Right ventricle myocardium inferior (tissue), 1 donor: ENCODE measurements at regions of chr15 and their contacts with region 1.

Region 1: GRCh38 chr15:88476635-88477060 is 9.1 kb downstream of the MRPS11 start:
- DNase-seq: no peak
- ATAC-seq: peak; percentile 74

Region 2: DNA sequence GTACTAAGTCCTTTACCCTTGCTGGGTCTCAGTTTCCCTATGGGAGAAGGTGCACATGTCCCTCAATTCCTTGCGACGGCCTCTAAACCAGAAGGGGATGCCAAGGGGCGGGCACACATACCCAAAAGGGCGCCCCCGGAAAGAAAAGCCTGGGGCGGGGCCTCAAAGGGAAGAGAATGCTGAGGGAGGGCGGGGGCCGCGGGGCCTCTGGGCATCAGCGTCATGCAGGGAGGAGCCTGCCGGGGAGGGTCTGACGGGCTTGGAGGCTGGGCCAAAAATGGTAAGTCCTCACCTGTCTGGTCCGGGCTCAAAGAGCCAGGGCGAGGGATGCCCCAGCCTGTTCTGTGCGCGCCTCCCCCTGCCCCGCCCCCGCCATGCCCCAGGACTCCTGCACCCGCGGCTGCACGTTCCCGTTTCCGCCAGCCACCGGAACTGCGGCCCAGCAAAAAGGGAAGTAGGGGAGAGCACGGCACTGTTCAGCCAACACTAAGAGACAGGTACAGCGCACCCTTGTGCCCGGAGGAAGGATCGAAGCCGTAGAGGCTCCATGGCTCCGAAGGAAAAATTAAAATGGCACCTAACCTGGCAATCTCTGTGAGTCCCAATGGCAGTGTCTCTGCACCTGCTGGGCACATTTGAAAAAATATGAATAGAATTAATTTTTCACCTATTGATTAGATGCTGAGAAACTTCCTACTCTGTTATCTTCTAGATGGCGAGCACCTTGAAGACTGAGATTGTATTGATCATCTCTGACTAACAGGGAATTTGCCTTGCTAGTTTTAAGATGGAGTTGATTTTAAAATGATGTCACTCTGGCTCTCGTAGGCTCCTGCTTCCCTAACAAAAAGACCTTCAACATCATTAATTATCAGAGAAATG is 69.8 kb after region 1 on chr15 and contains the start of gene DET1:
- intact Hi-C with region 1: loop called (anchors 5 kb)
- DNase-seq: peak; percentile 97
- ATAC-seq: peak; percentile 99
- total RNA-seq, gene DET1: 6.5 TPM

Region 3: GRCh38 chr15:88610701-88611231 is 134.1 kb after region 1 on chr15:
- intact Hi-C with region 1: loop called (anchors 1 kb)
- DNase-seq: no peak
- ATAC-seq: no peak

Region 4: DNA sequence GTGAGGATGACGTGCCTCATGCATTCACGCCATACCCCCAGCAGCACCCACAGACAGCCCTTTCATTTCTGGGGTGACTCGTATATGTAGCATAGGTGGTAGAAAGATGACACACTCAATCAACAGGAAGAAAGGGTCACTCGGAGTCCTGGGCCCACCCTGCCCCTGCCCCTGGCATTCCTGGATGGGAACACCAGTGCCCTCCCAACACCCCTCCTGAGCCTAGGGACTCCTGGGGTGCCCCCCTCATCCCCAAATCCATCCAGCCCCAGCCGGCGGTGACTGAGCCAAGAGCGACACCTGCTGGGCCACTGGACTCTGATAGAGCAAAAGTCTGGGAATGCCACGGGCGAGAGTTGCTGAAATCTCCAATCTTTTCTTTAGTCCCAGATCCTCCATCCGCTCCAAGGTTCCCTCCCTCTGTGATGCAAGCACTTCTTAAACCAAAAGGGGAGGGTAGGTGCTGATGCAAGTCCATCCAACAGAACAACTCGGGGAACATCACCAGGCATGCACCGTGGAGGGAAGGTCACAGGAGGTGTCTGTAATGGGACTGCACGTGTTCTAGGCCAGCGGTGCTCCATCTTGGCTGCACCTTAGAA is 357.7 kb after region 1 on chr15:
- intact Hi-C with region 1: loop called (anchors 5 kb)
- DNase-seq: no peak
- ATAC-seq: peak; percentile 58

Region 5: GRCh38 chr15:88897456-88898194 is 421.0 kb after region 1 on chr15:
- intact Hi-C with region 1: loop called (anchors 10 kb)
- DNase-seq: peak; percentile 93
- ATAC-seq: peak; percentile 92